Ascending aorta (tissue), 2 donors: ENCODE measurements at regions of chr11 and their contacts with region 1.

Region 1: DNA sequence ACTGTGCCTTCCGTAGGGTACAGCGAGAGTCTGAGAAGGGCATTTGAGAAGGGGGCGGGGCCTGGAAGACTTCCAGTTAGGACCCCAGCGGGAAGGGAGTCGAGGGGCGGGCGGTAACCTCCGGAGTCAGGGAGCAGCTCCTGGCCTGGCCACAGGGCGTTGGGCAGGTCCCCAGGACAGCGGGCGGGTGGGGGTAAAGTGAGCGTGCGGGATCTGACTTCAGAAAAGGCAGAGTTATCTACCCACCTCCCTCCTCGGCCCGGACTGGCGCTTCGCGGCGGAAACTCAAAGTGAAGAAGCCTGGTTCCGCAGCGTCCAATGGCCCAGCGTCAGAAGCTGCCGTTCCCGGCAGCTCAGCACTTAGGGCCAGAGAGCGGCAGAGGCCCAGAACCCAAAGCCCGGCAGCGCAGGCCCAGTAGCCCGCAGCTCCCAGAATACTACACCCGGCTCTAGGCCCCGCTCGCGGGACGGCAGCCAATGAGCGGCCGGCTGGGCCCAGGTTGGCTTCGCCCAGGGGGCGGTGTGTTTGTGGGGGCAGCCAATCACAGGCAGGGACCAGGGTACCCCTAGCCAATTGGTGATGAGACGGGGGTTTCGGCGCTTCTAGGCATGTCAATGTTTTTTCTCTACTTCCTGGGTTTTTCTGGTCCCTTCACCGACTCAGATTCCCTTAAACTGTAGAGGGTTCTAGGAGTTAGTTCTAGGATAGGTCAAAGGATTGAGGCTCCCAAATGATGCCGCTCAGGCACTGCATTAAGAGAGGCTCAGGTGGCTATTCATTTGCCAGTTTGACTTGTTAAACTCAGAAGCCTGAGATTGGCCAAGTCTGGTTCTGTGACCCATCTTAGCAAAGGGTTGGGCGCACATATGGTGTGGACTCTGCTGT is at the start of gene TRIM68:
- DNase-seq: peak; percentile 86 to 98
- H3K4me3 ChIP-seq: peak within 1 kb of the TSS; percentile 70 to 88
- H3K27ac ChIP-seq: peak within 1 kb of the TSS; percentile 94 to 95
- H3K4me1 ChIP-seq: peaks cover 0 to 10% of the 10 kb centered on the region in 2 donors
- H3K27me3 ChIP-seq: no peaks in the 10 kb centered on the region
- CTCF ChIP-seq: no peak
- total RNA-seq, gene TRIM68: 18.6 TPM

Region 2: DNA sequence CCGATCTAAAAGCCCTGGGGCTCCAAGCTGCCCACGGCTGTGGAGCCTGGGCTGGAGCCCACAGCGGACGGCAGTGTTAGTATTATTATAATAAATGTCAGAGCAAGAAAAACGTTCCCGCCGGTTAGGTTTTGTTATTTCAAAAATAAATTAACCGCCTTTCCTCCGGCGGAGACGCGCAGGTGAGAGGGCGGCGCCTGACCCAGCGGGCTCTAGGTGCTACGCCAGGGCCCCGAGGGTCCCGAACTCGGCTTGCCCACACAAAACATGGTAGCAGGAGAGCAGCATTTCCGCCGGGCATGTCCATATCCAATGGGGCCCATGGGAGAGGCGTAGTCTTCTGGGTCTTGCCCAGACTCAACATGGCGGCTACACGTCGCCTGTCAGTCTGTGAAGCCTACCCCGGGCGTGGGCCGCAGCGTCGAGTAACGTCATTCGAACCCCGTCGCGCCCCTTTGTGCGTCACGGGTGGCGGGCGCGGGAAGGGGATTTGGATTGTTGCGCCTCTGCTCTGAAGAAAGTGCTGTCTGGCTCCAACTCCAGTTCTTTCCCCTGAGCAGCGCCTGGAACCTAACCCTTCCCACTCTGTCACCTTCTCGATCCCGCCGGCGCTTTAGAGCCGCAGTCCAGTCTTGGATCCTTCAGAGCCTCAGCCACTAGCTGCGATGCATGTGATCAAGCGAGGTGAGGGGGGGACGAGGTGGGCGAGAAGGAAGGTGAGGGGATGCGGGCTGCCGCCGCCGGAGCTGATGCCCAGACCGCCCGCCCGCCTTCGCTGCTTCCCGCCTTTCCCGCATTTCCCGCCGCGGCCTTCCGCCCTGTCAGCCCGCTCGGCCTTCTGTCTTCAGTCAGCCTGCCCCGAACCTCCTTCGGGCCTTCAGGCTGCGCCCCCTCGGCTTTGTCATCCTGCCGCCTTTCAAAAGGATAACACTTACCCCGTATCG is 513.4 kb before region 1 on chr11 and contains the start of gene RRM1:
- intact Hi-C with region 1: loop called (anchors 5 kb)
- DNase-seq: peak; percentile 75 to 97
- H3K4me3 ChIP-seq: peak within 1 kb of the TSS; percentile 70 to 82
- H3K27ac ChIP-seq: peak within 1 kb of the TSS; percentile 92 to 94
- H3K4me1 ChIP-seq: peaks cover 9 to 11% of the 10 kb centered on the region in 2 donors
- H3K27me3 ChIP-seq: no peaks in the 10 kb centered on the region
- CTCF ChIP-seq: no peak
- total RNA-seq, gene RRM1: 114 TPM

Region 3: GRCh38 chr11:4393209-4393857 is 214.7 kb before region 1 on chr11 and contains the start of gene TRIM21:
- intact Hi-C with region 1: loop called (anchors 2 kb)
- DNase-seq: peak; percentile 65 to 89
- H3K4me3 ChIP-seq: peak within 1 kb of the TSS; percentile 85 to 93
- H3K27ac ChIP-seq: peak within 1 kb of the TSS; percentile 73 to 78
- H3K4me1 ChIP-seq: peaks cover 2 to 3% of the 10 kb centered on the region in 2 donors
- H3K27me3 ChIP-seq: no peaks in the 10 kb centered on the region
- CTCF ChIP-seq: no peak
- total RNA-seq, gene TRIM21: 7.8 TPM

Region 4: GRCh38 chr11:4665424-4665823 is 57.4 kb after region 1 on chr11:
- intact Hi-C with region 1: no loop called
- DNase-seq: no peak
- H3K4me3 ChIP-seq: no peak overlapping the region
- H3K27ac ChIP-seq: no peak overlapping the region
- H3K4me1 ChIP-seq: no peaks in the 10 kb centered on the region
- H3K27me3 ChIP-seq: no peaks in the 10 kb centered on the region
- CTCF ChIP-seq: no peak

Region 5: GRCh38 chr11:5600374-5600851 is 992.4 kb after region 1 on chr11:
- intact Hi-C with region 1: loop called (anchors 10 kb)
- DNase-seq: peak in 1 of 2 donors; percentile 87
- H3K4me3 ChIP-seq: no peak overlapping the region
- H3K27ac ChIP-seq: peak overlapping the region; percentile 68 to 79
- H3K4me1 ChIP-seq: peaks cover 5% of the 10 kb centered on the region in 2 donors
- H3K27me3 ChIP-seq: no peaks in the 10 kb centered on the region
- CTCF ChIP-seq: peak; percentile 35 to 86 (median 67)

Region 6: DNA sequence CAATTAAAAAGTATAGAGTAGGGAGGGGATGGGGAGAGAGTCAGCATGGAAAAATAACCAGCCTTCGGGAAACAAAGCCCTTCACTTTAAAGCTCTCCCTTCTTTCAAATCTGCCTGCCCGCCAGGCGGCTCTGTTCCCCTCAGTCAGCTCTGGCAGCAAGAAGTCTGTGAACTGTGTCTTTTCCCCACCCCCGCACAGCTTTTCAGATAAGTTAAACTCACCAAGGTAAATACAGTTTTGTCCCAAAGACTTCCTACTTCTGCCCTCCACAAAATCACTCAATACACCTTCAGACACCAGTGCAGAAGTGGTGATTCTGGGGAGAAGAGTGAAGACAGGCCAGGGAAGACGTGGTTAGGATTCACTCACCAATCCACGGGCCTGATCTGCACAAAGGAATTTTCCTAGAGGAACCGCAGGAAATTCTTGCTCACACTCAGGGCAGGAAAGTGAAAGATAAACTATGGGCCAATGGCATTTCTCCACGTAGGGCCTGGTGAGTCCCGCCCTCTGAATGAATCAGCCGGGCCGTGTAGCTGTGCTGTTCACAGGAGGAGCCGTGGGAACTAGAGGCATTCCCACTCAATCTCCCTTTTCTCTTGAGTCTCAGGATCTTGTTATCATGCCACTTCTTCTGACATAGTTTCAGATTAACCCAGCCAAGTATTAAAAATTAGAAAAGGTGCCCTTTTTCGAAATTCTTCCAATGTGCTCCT is 1076.8 kb after region 1 on chr11 and contains the start of gene TRIM5:
- intact Hi-C with region 1: loop called (anchors 5 kb)
- DNase-seq: peak; percentile 70 to 96
- H3K4me3 ChIP-seq: peak within 1 kb of the TSS; percentile 60 to 64
- H3K27ac ChIP-seq: peak within 1 kb of the TSS; percentile 88 to 94
- H3K4me1 ChIP-seq: peaks cover 3 to 12% of the 10 kb centered on the region in 2 donors
- H3K27me3 ChIP-seq: no peaks in the 10 kb centered on the region
- CTCF ChIP-seq: peak; percentile 48 to 72 (median 55)
- total RNA-seq, gene TRIM5: 45.1 TPM